ENCODE measurements at regions of chr2 and their contacts with region 1.

Region 1: GRCh38 chr2:237092920-237093781 is 7.5 kb downstream of the COPS8 start:
- DNase-seq: peak; percentile 2
- ATAC-seq: peak; percentile 74
- H3K4me3 ChIP-seq: no peak overlapping the region
- H3K27ac ChIP-seq: no peak overlapping the region
- H3K4me1 ChIP-seq: no peaks in the 10 kb centered on the region
- H3K27me3 ChIP-seq: no peaks in the 10 kb centered on the region
- CTCF ChIP-seq: peak; percentile 20 to 47 (median 44); a peak in 5 of 6 replicates
- POLR2A ChIP-seq: no peak
- RAD21 ChIP-seq: peak; percentile 53

Region 2: GRCh38 chr2:237072067-237072931 is 20.9 kb before region 1 on chr2:
- CTCF ChIA-PET with region 1: no interaction called
- POLR2A ChIA-PET with region 1: no interaction called
- RAD21 ChIA-PET with region 1: no interaction called
- intact Hi-C with region 1: no loop called
- DNase-seq: peak; percentile 19
- ATAC-seq: peak; percentile 93
- H3K4me3 ChIP-seq: no peak overlapping the region
- H3K27ac ChIP-seq: no peak overlapping the region
- H3K4me1 ChIP-seq: peaks cover 0 to 5% of the 10 kb centered on the region in 2 experiments; a peak in 1 of 4 replicates
- H3K27me3 ChIP-seq: no peaks in the 10 kb centered on the region
- CTCF ChIP-seq: peak; percentile 52 to 98 (median 97)
- POLR2A ChIP-seq: no peak
- RAD21 ChIP-seq: peak; percentile 82

Region 3: GRCh38 chr2:237413777-237414661 is 320.9 kb after region 1 on chr2 and contains the start of gene COL6A3:
- CTCF ChIA-PET with region 1: interaction called, 5 read pairs
- POLR2A ChIA-PET with region 1: no interaction called
- RAD21 ChIA-PET with region 1: no interaction called
- intact Hi-C with region 1: loop called (anchors 1 kb)
- DNase-seq: no peak
- ATAC-seq: no peak
- H3K4me3 ChIP-seq: no peak within 1 kb of the TSS
- H3K27ac ChIP-seq: no peak within 1 kb of the TSS
- H3K4me1 ChIP-seq: peaks cover 0 to 3% of the 10 kb centered on the region in 2 experiments; a peak in 1 of 4 replicates
- H3K27me3 ChIP-seq: peaks cover 25% of the 10 kb centered on the region; the same call in 1 of the 2 replicates
- CTCF ChIP-seq: no peak
- POLR2A ChIP-seq: no peak
- RAD21 ChIP-seq: no peak
- total RNA-seq, gene COL6A3: 1.2 TPM